ENCODE measurements at regions of chr2 and their contacts with region 1.

Region 1: DNA sequence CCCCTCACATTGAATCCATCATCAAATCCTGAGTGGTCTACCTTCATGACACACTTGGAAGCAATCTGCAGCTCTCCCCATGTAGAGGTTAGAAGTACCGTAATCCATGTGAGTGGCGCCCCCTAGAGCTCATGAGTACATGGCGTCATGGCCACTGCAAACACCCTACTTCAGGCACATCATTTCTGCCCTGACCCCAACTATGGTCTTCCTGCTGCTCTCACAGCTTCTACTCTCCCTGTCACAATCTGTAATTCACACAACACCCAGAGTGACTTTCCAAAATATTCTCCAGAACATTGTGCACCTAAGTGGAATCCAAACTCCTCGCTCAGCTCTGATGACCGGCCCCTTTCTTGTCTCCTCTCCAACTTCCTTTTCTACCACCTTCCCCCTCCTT is 141.9 kb downstream of the ANKRD44 start:
- DNase-seq: peak; percentile 79
- ATAC-seq: peak; percentile 79
- H3K4me3 Mint-ChIP-seq: no peak overlapping the region
- H3K27ac Mint-ChIP-seq: peak overlapping the region; percentile 45
- H3K4me1 Mint-ChIP-seq: peaks cover 33% of the 10 kb centered on the region
- H3K27me3 Mint-ChIP-seq: no peaks in the 10 kb centered on the region

Region 2: DNA sequence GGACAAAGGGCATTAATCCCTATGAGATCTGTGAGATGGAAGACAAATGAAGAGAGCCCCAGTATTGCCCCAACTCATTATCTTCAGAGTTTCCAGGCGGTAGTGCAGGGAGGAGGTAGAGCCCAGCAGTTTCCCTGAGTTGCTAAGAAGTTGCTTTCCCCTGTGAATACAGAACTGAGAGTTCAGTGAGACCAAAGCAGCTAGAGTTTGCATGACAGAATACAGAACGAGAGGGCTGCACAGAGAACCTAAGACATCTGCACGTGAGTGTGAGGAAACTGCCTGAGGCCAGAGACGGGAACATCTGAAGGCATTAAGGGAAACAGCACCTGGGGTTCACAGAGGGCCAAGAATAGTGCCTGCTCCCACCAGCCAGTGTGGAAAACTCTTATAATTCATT is 224.1 kb before region 1 on chr2:
- CTCF ChIA-PET with region 1: no interaction called
- DNase-seq: no peak
- ATAC-seq: no peak
- H3K4me3 Mint-ChIP-seq: no peak overlapping the region
- H3K27ac Mint-ChIP-seq: no peak overlapping the region
- H3K4me1 Mint-ChIP-seq: peaks cover 10% of the 10 kb centered on the region
- H3K27me3 Mint-ChIP-seq: peaks cover 3% of the 10 kb centered on the region

Region 3: GRCh38 chr2:197179744-197180498 is 11.2 kb after region 1 on chr2:
- CTCF ChIA-PET with region 1: interaction called, 12 read pairs
- DNase-seq: no peak
- ATAC-seq: no peak
- H3K4me3 Mint-ChIP-seq: no peak overlapping the region
- H3K27ac Mint-ChIP-seq: peak overlapping the region; percentile 3
- H3K4me1 Mint-ChIP-seq: peaks cover 31% of the 10 kb centered on the region
- H3K27me3 Mint-ChIP-seq: no peaks in the 10 kb centered on the region

Region 4: GRCh38 chr2:197191177-197191939 is 22.7 kb after region 1 on chr2:
- CTCF ChIA-PET with region 1: interaction called, 10 read pairs
- DNase-seq: no peak
- ATAC-seq: peak; percentile 35
- H3K4me3 Mint-ChIP-seq: peak overlapping the region; percentile 44
- H3K27ac Mint-ChIP-seq: peak overlapping the region; percentile 78
- H3K4me1 Mint-ChIP-seq: peaks cover 73% of the 10 kb centered on the region
- H3K27me3 Mint-ChIP-seq: no peaks in the 10 kb centered on the region

Region 5: DNA sequence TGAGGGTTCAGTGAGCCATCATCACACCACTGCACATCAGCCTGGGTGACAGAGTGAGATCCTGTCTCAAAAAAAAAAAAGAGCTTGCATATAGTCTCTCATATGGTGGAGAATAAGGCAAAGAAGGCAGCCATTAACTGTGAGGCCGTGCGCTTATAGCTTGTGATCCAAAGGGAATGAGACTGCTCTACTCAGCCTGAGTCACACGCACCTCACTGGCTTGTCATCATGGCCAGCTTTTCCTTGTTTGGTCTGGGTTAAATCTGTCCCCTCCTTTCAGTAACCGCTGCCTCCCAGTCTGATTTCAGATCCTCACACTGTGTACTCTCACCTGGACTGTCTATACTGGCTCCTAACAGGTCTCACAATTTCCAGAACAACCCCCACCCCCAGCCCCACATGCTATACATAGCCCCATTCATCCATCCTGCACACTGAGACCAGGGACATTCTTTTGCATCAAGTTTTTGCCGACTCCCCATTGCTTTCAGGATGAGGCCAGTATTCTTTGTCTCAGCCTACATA is 177.2 kb after region 1 on chr2:
- CTCF ChIA-PET with region 1: no interaction called
- DNase-seq: no peak
- ATAC-seq: no peak
- H3K4me3 Mint-ChIP-seq: no peak overlapping the region
- H3K27ac Mint-ChIP-seq: no peak overlapping the region
- H3K4me1 Mint-ChIP-seq: peaks cover 10% of the 10 kb centered on the region
- H3K27me3 Mint-ChIP-seq: no peaks in the 10 kb centered on the region

Measured in activated CD8-positive, alpha-beta memory T cell treated with anti-CD3 and anti-CD28 coated beads, Interleukin-2, amount 10 ng/mL, durations not matched to agents 7 days and 5 days (primary cell).